Dorsolateral prefrontal cortex (tissue), 120 donors: ENCODE measurements at regions of chr2 and their contacts with region 1.

Region 1: DNA sequence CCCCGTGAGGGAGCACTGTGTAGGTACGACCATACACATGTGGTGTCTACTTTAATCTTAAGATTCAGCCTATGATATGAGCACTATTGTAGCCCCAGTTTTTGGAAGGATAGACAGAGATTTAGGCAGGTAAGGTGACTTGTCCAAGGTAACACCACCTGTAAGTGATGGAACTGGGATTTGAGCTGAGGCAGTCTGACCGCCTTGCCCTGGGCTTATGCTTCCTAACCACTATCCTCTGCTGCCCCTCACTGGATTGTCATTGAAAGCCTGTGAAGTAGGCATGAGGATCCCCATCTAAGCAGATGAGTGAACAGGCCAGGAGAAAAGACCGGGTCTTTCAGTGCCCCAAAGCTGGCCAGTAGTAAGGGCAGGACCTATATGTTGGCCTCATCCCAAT is 343.8 kb downstream of the CYRIA start:
- DNase-seq: peak in 3 of 10 donors; percentile 14 to 51 (median 47)
- H3K4me3 ChIP-seq: no peak overlapping the region
- H3K27ac ChIP-seq: peak overlapping the region in 4 of 59 donors; percentile 45 to 79 (median 74)
- H3K27me3 ChIP-seq: no peaks in the 10 kb centered on the region
- CTCF ChIP-seq: peak in 47 of 56 donors; percentile 12 to 69 (median 45)

Region 2: GRCh38 chr2:15799432-15799827 is 522.4 kb before region 1 on chr2:
- intact Hi-C with region 1: loop called in 1 of 2 experiments (anchors 10 kb)
- DNase-seq: no peak
- H3K4me3 ChIP-seq: no peak overlapping the region
- H3K27ac ChIP-seq: peak overlapping the region in 27 of 59 donors; percentile 9 to 91 (median 80)
- H3K27me3 ChIP-seq: peaks cover 0 to 5% (median 0%) of the 10 kb centered on the region in 45 donors
- CTCF ChIP-seq: no peak

Region 3: DNA sequence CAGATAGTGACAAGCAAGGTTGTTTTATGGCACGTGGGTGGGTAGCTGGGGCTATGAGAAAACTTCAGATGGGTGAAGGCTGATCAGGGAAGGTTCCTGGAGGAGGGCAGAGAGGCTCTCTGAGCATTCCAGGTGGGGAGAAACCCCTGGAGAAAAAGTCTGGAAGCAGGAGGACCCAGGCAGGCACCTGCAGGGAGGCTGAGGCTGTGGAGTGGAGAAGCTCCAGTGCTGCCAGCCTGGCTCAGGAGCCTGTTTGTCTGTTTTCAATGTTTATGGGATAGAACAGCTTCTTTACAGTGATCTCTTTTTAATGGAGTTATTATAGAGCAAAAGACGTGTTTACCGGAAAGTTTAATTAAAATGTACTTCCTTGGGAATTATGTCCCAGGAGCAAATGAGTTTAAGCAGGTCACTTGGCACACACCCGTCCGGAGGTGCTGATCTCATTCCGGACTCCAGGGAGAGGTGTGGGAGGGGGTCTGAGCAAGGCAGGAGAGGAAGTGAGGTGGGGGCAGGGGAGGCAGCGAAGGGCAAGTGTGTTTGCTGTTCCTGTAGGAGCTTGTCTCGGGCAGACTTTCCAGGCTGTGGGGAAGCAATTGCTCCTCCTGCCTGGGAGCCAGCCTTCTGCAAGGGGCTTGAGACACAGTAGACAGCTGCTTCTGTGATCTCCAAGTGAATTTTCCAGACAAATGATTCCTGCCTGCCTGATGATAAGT is 142.0 kb before region 1 on chr2:
- intact Hi-C with region 1: no loop called
- DNase-seq: no peak
- H3K4me3 ChIP-seq: no peak overlapping the region
- H3K27ac ChIP-seq: no peak overlapping the region
- H3K27me3 ChIP-seq: peaks cover 0 to 7% (median 0%) of the 10 kb centered on the region in 45 donors
- CTCF ChIP-seq: no peak

Region 4: GRCh38 chr2:16218625-16219024 is 103.2 kb before region 1 on chr2:
- intact Hi-C with region 1: loop called in 1 of 2 experiments (anchors 5 kb)
- DNase-seq: no peak
- H3K4me3 ChIP-seq: no peak overlapping the region
- H3K27ac ChIP-seq: no peak overlapping the region
- H3K27me3 ChIP-seq: peaks cover 0 to 6% (median 0%) of the 10 kb centered on the region in 45 donors
- CTCF ChIP-seq: peak in 30 of 56 donors; percentile 10 to 53 (median 32)

Region 5: DNA sequence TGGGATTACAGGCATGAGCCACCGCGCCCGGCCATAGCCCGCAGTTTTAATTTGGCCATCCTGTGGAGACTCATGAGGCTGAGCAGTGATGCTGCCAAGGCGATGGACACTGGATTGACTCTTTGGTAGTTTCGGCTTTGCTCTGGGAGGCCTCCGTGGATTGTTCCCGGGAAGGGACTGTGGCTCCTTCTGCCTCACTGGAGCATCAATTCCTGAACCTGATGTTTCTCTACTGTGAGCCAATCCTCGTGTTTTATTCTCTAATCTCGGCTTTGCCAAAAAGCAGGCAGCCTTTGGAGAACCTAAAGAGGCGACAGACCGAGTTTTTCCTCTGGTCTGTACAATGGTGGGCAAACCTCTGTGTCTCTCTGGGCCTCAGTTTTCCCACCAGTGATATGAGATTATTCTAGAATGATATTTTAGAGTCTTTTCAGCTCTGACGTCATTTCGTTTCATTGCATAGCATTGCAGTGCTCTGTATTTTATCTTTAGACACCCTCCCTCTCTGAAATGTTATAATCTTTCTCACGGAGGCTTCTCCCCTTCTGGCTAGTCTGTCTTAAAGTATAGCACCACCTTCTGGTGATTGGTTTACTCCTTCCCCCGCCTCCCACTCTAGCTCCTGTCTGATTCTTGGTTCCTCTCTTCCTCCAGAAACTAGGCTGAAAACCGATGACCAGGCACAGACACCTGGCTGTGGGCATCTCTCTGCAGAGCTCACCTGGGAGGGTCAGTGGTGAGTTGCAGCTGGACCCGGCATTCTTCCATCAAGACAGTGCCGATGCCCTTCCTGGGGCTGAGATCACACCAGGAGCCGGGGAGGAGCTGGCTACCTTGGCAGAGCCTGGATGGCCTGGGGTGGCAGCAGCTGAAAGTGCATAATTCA is 40.2 kb before region 1 on chr2:
- intact Hi-C with region 1: loop called in 1 of 2 experiments (anchors 2 kb)
- DNase-seq: peak in 5 of 10 donors; percentile 6 to 57 (median 38)
- H3K4me3 ChIP-seq: no peak overlapping the region
- H3K27ac ChIP-seq: no peak overlapping the region
- H3K27me3 ChIP-seq: no peaks in the 10 kb centered on the region
- CTCF ChIP-seq: peak; percentile 26 to 84 (median 68)

Region 6: GRCh38 chr2:16386031-16386430 is 64.2 kb after region 1 on chr2:
- intact Hi-C with region 1: no loop called
- DNase-seq: no peak
- H3K4me3 ChIP-seq: no peak overlapping the region
- H3K27ac ChIP-seq: no peak overlapping the region
- H3K27me3 ChIP-seq: peaks cover 0 to 7% (median 0%) of the 10 kb centered on the region in 45 donors
- CTCF ChIP-seq: no peak

Region 7: GRCh38 chr2:16650287-16651249 is 328.7 kb after region 1 on chr2:
- intact Hi-C with region 1: no loop called
- DNase-seq: no peak
- H3K4me3 ChIP-seq: peak overlapping the region in 57 of 59 donors; percentile 8 to 63 (median 42)
- H3K27ac ChIP-seq: peak overlapping the region in 58 of 59 donors; percentile 0 to 92 (median 79)
- H3K27me3 ChIP-seq: no peaks in the 10 kb centered on the region
- CTCF ChIP-seq: no peak